WTC11 (cell line): ENCODE measurements at regions of chr22 and their contacts with region 1.

Region 1: GRCh38 chr22:22144858-22145257 is 99.7 kb upstream of the VPREB1 start:
- DNase-seq: no peak
- ATAC-seq: no peak
- H3K4me3 Mint-ChIP-seq: no peak overlapping the region
- H3K27ac Mint-ChIP-seq: no peak overlapping the region
- H3K4me1 Mint-ChIP-seq: peaks cover 17% of the 10 kb centered on the region
- H3K27me3 Mint-ChIP-seq: peaks cover 94% of the 10 kb centered on the region
- CTCF ChIP-seq: no peak

Region 2: GRCh38 chr22:22037740-22038139 is 107.1 kb before region 1 on chr22:
- CTCF ChIA-PET with region 1: no interaction called
- POLR2A ChIA-PET with region 1: no interaction called
- DNase-seq: no peak
- ATAC-seq: no peak
- H3K4me3 Mint-ChIP-seq: no peak overlapping the region
- H3K27ac Mint-ChIP-seq: no peak overlapping the region
- H3K4me1 Mint-ChIP-seq: 0 out of 2 replicates have a peak, but pooled peaks cover 5% of the 10 kb centered on the region
- H3K27me3 Mint-ChIP-seq: peaks cover 96% of the 10 kb centered on the region
- CTCF ChIP-seq: no peak

Region 3: GRCh38 chr22:22156716-22157347 is 12.0 kb after region 1 on chr22:
- CTCF ChIA-PET with region 1: interaction called, 11 read pairs
- POLR2A ChIA-PET with region 1: no interaction called
- DNase-seq: peak; percentile 63
- ATAC-seq: peak; percentile 82
- H3K4me3 Mint-ChIP-seq: no peak overlapping the region
- H3K27ac Mint-ChIP-seq: no peak overlapping the region
- H3K4me1 Mint-ChIP-seq: no peaks in the 10 kb centered on the region
- H3K27me3 Mint-ChIP-seq: peaks cover 98% of the 10 kb centered on the region
- CTCF ChIP-seq: peak; percentile 58

Region 4: GRCh38 chr22:22235558-22235957 is 90.7 kb after region 1 on chr22:
- CTCF ChIA-PET with region 1: no interaction called
- POLR2A ChIA-PET with region 1: no interaction called
- DNase-seq: peak; percentile 57
- ATAC-seq: no peak
- H3K4me3 Mint-ChIP-seq: no peak overlapping the region
- H3K27ac Mint-ChIP-seq: no peak overlapping the region
- H3K4me1 Mint-ChIP-seq: no peaks in the 10 kb centered on the region
- H3K27me3 Mint-ChIP-seq: peaks cover 100% of the 10 kb centered on the region
- CTCF ChIP-seq: peak; percentile 44